Colonic mucosa (tissue), 4 donors: ENCODE measurements at regions of chr9 and their contacts with region 1.

Region 1: DNA sequence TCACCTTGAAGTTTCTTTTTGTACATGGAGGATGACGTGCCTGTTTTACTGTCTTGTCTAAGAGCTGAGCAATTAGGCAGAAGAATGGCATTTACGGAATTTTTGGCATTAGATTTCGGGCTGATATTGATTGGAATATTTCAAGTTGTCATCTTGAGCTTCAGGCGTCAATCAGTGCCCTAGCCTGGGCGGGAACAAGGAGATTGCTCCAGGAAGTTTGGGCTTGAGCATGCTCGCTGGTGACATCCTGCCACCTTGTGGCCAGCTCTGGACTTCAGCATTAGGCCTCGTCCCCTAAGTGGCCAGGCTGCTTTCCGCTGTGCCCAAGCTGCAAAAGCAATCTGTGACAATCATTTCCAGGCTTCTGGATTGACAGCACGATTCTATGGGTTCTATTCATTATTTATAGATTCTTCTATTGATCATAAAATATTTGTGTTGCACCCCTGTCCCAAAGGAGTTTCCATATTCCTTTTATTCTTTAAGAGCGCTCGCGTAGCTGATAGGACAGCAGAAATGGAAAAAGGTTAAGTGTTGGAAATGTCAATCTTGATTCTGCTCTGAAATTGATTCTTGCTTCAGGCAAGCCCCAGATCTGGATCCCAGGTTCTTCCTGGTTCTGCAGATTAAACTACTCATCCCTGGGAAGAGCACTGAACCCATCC is 79.3 kb downstream of the SLC28A3 start:
- DNase-seq: peak; percentile 89
- H3K4me3 ChIP-seq: no peak overlapping the region
- H3K27ac ChIP-seq: no peak overlapping the region
- H3K4me1 ChIP-seq: no peaks in the 10 kb centered on the region
- H3K27me3 ChIP-seq: no peaks in the 10 kb centered on the region
- CTCF ChIP-seq: peak; percentile 87

Region 2: DNA sequence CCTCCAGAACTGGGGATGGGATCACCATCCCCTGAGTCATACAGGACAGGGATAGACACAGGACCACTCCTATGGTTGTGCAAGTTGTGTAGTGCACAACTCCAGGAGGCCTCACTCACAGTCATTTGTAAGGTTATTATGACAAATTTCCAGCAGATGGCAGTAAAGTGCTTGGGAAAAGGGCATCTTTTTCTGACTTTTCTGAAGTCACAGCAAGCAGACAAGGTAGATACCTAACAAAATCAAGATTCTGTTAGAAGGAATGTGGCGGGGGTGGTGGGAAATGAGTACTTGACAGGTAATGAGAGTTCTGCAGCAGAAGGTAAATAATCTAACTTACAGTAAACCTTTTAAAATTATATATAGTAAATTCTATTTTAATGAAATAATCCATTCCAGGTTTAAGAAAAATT is 323.3 kb before region 1 on chr9:
- intact Hi-C with region 1: loop called (anchors 2 kb)
- DNase-seq: no peak
- H3K4me3 ChIP-seq: no peak overlapping the region
- H3K27ac ChIP-seq: no peak overlapping the region
- H3K4me1 ChIP-seq: no peaks in the 10 kb centered on the region
- H3K27me3 ChIP-seq: no peaks in the 10 kb centered on the region
- CTCF ChIP-seq: peak; percentile 45

Region 3: DNA sequence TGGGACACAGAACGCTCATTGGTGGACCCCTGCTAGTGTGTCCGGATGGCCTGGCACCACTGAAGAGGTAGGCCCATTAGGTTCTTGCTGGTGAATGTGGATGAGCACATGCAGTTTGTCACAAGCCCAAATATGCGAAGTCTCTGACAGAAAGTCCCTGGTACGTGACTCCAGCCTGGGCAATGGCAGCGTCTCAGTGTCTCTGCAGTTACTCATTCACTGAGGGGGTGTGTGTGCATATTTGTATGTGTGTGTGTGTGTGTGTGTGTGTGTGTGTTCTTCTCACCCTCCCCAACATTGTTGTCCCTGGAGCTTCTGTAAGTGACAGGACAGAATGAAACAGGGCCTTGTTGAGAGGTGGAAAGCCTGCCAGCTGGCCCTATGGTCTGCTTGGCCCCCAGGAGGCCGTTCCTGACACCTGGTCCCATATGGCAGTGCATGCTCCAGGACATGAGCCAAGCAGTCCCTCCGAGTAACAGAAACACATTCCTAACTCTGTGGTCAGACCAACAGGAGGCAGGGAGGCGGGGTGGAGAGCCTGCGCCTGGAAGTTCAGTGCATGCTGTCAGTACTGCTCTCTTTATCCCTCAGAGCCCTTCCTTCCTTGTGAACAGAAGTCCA is 90.6 kb before region 1 on chr9:
- intact Hi-C with region 1: loop called (anchors 5 kb)
- DNase-seq: peak; percentile 53
- H3K4me3 ChIP-seq: no peak overlapping the region
- H3K27ac ChIP-seq: no peak overlapping the region
- H3K4me1 ChIP-seq: no peaks in the 10 kb centered on the region
- H3K27me3 ChIP-seq: no peaks in the 10 kb centered on the region
- CTCF ChIP-seq: no peak

Region 4: DNA sequence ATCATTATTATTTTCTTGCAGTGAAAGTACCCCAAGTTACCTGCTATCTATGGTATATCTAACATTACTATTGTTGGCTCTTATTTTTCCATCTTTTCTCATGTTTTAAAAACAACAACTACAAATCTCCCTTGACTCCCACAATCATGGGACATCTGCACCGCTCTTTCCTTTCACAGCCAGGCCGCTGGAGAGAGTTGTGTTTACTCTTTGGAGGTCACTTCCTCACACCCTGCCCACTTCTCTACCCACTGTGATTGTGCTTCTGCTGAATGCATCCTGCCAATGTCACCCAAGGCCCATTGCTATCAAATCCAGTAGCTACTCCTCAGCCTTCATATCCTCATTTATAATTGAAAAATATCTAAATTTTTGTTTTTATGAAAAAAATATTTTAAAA is 49.7 kb after region 1 on chr9:
- intact Hi-C with region 1: loop called (anchors 5 kb)
- DNase-seq: no peak
- H3K4me3 ChIP-seq: no peak overlapping the region
- H3K27ac ChIP-seq: no peak overlapping the region
- H3K4me1 ChIP-seq: no peaks in the 10 kb centered on the region
- H3K27me3 ChIP-seq: no peaks in the 10 kb centered on the region
- CTCF ChIP-seq: no peak